Head of caudate nucleus (tissue), 42 donors: ENCODE measurements at regions of chr12 and their contacts with region 1.

Region 1: DNA sequence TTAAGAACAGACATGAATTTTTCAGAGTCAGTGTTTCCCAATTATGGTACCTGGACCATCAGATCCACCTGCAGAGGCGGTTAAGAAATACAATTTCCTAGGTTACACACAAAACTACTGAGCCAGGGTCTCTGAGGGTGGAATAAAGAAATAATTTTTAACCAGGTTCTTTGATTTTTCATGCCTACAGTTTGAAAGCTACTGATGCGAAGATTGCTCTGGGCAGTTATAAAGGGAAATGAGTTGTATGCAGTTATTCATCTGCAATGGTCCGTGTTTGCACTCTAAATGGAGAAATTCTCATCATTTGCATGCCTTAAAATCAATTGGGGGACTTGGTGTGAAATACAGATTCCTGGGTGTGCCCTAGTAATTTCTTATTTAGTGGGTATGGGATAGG is 89.7 kb downstream of the ERGIC2 start:
- DNase-seq: no peak

Region 2: DNA sequence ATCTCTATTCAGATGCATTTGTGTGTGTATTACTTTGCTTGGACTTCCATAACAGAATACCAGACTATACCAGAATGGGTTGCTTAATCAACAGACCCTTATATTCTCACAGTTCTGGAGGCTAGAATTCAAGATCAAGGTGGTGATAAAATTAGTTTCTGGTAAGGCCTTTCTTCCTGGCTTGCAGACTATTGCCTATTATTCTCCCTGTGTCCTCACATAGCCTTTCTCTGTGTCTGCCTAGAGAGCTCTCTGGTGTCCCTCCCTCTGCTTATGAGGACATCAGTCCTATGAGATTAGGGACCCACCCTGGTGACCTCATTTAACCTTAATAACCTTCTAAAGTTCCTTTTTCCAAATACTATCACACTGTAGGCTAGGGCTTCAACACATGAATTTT is 36.2 kb before region 1 on chr12:
- intact Hi-C with region 1: loop called (anchors 2 kb)
- DNase-seq: no peak

Region 3: DNA sequence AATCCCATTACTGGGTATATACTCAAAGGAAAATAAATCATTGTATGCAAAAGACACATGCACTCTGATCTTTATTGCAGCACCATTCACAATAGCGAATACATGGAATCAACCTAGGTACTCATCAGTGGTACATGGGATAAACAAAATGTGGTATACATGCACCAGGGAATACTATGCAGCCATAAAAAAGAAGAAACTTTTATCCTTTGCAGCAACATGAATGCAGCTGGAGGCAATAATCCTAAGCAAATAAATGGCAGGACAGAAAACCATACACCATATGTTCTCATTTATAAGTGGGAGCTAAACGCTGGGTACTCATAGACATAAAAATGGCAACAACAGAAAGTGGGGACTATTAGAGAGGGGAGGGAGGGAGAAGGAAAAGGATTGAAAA is 73.9 kb after region 1 on chr12:
- intact Hi-C with region 1: no loop called
- DNase-seq: no peak